PC-3 (cell line): ENCODE measurements at regions of chr10 and their contacts with region 1.

Region 1: DNA sequence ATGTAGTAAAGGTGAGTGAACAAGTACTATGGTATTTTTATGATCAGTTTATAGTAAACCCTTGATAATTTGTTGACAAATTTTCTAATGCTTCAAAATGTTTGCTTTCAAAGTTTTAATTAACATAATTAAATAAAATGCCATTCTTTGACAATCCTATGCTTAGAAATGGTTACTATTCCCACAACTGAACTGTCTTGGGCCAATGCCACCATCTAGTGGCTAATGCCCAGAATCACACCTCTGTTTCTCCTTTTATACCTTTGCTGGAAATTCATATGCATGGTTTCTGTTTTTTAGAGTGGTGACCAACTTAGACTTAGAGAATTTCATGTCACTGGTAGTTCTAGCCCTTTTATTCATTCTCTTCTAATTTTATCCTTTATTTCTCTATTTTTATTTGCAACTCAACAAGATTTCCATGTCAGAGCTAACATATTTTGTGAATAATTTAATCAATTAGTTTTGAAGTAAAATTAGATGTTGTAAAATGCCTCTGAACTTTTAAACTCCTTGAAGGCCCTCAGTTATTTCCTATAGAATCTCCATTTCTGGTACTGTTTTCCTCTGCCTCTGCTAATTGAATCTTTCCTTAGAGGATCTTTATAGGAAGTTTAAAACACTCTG is 31.1 kb downstream of the PCGF5 start:
- DNase-seq: peak; percentile 65
- ATAC-seq: no peak
- H3K4me3 ChIP-seq: no peak overlapping the region
- H3K27ac ChIP-seq: no peak overlapping the region
- H3K4me1 ChIP-seq: no peaks in the 10 kb centered on the region
- H3K27me3 ChIP-seq: no peaks in the 10 kb centered on the region
- CTCF ChIP-seq: peak; percentile 83

Region 2: GRCh38 chr10:90912174-90912573 is 339.4 kb before region 1 on chr10:
- CTCF ChIA-PET with region 1: no interaction called
- POLR2A ChIA-PET with region 1: interaction called, 5 read pairs
- intact Hi-C with region 1: loop called (anchors 1 kb)
- DNase-seq: no peak
- ATAC-seq: no peak
- H3K4me3 ChIP-seq: no peak overlapping the region
- H3K27ac ChIP-seq: no peak overlapping the region
- H3K4me1 ChIP-seq: peaks cover 6% of the 10 kb centered on the region
- H3K27me3 ChIP-seq: no peaks in the 10 kb centered on the region
- CTCF ChIP-seq: no peak

Region 3: DNA sequence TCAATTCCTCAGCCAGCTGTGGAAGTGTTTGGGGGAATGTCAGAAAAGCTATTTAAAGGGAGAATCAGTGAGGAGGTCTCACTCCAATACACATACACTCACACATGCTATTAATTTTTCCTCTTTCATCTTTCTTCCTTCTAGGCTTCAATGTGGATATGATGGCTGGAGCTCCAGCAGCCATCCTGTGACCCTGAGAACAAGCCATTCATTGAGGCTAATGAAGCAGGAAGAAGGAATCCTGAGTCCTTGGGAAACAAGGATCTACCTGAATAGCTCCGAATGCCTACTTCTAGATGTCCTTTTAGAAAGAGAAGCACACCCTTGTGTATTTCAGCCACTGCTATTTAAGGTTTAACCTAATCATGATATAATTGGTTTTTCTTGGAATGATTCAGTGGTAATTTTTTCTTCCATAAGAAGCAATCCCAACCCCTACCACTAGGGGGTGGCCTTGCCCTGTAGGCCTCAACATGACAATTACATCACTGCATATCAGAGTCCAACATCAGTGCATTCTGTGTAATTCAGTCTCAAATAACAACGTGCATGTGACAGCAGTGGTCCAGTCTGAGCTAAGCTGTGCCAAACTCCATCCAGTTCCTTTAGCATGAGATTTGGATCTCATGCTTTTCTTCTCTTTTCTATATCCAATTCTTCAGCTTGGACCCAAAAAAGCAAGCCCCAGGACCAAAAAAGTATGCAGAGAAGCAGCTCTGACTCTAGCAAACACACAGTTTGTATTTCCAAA is 245.4 kb before region 1 on chr10:
- CTCF ChIA-PET with region 1: no interaction called
- POLR2A ChIA-PET with region 1: no interaction called
- intact Hi-C with region 1: loop called (anchors 1 kb)
- DNase-seq: peak; percentile 69
- ATAC-seq: peak; percentile 53
- H3K4me3 ChIP-seq: no peak overlapping the region
- H3K27ac ChIP-seq: no peak overlapping the region
- H3K4me1 ChIP-seq: peaks cover 16% of the 10 kb centered on the region
- H3K27me3 ChIP-seq: no peaks in the 10 kb centered on the region
- CTCF ChIP-seq: peak; percentile 89

Region 4: DNA sequence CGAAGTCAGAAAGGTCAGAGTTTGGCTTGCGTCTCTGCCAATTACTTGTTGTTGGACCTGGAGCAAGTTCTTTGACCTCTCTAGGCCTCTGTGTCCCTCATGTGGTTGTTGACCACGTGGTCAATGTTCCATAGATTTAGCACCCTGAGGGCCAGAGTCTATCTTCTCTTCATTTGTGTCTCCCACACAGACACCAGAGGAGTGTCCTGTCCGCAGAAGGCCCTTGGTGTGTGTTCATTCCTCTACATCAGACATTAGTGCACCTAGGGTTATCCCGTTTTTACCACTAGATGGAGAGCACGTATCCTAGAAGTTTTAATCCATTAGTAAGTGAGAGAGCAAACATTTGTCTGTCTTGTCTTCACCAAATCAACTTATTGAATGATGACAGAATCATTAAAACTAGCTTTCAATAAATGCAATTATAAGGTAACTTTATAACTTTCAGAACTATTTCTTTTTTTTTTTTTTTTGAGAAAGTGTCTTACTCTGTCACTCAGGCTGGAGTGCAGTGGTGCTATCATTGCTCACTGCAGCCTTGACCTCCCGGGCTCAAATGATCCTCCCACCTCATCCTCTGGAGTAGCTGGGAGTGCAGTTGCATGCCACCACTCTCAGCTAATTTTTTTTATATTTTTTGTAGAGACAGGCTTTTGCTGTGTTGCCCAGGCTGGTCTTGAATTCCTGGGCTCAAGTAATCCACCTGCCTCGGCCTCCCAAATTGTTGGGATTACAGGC is 208.2 kb before region 1 on chr10:
- CTCF ChIA-PET with region 1: no interaction called
- POLR2A ChIA-PET with region 1: no interaction called
- intact Hi-C with region 1: loop called (anchors 1 kb)
- DNase-seq: peak; percentile 46
- ATAC-seq: peak; percentile 69
- H3K4me3 ChIP-seq: no peak overlapping the region
- H3K27ac ChIP-seq: no peak overlapping the region
- H3K4me1 ChIP-seq: no peaks in the 10 kb centered on the region
- H3K27me3 ChIP-seq: no peaks in the 10 kb centered on the region
- CTCF ChIP-seq: peak; percentile 55

Region 5: DNA sequence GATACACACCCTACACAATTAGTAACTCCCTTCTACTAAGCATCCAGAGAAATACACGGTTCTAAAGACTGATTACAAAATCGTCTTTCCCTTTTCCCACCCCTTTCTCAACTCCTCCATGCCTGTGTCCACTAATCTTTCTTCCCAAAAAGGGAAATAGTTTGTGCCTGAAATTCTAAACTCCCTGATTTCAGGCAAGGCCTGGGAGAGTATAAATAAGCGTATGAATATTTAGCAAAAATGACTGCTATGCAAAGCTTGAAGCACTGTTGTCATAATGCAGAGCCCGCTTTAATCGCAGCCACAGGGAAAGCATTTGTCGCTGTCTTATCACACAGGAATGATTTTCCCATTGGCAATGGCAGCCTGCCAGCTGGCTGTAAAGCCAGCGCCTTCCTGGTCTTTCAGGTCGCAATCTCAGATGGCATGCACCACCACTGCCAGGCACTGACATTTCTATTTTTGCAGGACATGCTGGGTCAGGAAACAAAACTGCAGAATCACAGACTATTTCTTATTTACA is 173.9 kb before region 1 on chr10:
- CTCF ChIA-PET with region 1: no interaction called
- POLR2A ChIA-PET with region 1: no interaction called
- intact Hi-C with region 1: no loop called
- DNase-seq: peak; percentile 19
- ATAC-seq: no peak
- H3K4me3 ChIP-seq: no peak overlapping the region
- H3K27ac ChIP-seq: no peak overlapping the region
- H3K4me1 ChIP-seq: no peaks in the 10 kb centered on the region
- H3K27me3 ChIP-seq: peaks cover 45% of the 10 kb centered on the region
- CTCF ChIP-seq: no peak

Region 6: DNA sequence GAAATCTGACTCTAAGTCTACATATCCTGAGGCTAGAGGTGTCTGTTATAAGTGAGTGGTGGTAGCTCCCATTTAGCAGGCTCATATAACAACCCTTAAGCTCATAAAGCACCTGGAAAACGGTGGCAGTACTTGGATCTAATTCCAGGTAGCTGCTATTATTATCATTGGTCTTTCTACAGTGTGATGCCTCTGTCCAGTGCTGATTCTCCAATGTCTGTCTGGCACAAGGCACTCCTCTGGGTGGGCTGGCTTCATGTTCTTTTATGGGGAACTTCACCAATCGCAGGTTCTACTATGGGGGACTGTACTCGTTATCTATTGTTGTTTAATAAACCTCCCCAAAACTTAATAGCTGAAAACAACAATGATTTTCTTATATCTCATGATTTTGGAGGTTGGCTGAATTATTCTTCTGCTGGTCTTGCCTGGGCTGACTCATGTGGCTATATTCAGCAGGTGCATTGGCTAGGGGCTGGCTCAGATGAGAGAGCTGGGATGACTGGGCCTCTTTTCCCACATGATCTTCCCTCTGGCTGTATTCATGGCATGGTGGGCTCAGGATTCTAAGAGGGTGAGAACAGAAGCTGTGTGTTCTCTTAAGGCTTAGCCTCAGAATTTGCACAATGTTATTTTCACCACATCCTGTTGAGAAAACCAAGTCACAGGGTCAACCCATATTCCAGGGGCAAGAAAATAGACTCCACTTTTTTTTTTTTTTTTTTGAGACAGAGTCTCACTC is 124.0 kb before region 1 on chr10:
- CTCF ChIA-PET with region 1: no interaction called
- POLR2A ChIA-PET with region 1: no interaction called
- intact Hi-C with region 1: no loop called
- DNase-seq: no peak
- ATAC-seq: no peak
- H3K4me3 ChIP-seq: no peak overlapping the region
- H3K27ac ChIP-seq: no peak overlapping the region
- H3K4me1 ChIP-seq: no peaks in the 10 kb centered on the region
- H3K27me3 ChIP-seq: peaks cover 9% of the 10 kb centered on the region
- CTCF ChIP-seq: no peak